Activated T-helper 2 cell treated with anti-CD3 and anti-CD28 coated beads, Interferon-gamma antibody, Interleukin-2, Interleukin-4, amounts not matched to agents 10 μg/mL and 5 μg/mL and 100 μg/mL, durations not matched to agents 14 hours and 24 hours and 36 hours (primary cell): ENCODE measurements at regions of chr3 and their contacts with region 1.

Region 1: GRCh38 chr3:196179380-196180308 is 31.6 kb downstream of the ZDHHC19 start:
- DNase-seq: peak; percentile 81
- H3K4me3 Mint-ChIP-seq: peak overlapping the region; percentile 67
- H3K27ac Mint-ChIP-seq: peak overlapping the region; percentile 98
- H3K4me1 Mint-ChIP-seq: peaks cover 52% of the 10 kb centered on the region
- H3K27me3 Mint-ChIP-seq: no peaks in the 10 kb centered on the region

Region 2: DNA sequence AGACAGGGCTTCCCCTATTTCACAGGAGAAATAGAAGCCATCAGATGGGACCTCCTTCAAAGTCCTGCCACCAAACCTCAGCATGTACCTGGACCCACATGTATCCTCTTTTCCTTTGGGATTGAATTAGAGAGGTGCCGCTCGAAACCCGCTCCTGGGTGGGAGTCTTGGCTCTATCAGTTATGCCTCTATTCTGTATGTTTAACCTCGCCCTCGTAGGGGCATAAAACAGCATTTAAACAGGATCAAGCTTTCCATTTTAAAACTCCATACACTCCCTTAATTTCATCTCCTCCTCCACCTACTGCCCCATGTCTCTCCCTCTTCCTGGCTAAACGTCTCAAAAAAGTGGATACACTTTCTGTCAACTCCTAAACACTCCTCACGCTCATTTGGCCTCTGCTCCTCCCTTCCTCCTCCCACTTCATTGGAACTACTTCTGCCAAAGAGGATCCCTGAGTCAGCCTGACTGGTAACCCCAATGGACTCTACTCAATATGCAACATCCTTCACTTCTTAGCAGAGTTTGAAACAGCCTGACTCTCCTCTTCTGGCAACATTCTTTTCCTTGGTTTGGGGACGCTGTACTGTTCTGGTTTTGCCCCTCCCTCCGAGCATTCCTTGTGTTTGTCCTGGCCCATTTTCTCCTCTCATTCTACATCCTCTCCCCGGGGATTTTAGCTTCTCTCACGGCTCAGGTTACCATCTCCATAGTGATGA is 481.9 kb before region 1 on chr3:
- intact Hi-C with region 1: loop called (anchors 10 kb)
- DNase-seq: no peak
- H3K4me3 Mint-ChIP-seq: no peak overlapping the region
- H3K27ac Mint-ChIP-seq: peak overlapping the region; percentile 42
- H3K4me1 Mint-ChIP-seq: peaks cover 17% of the 10 kb centered on the region
- H3K27me3 Mint-ChIP-seq: no peaks in the 10 kb centered on the region

Region 3: GRCh38 chr3:196016485-196016884 is 163.2 kb before region 1 on chr3:
- intact Hi-C with region 1: no loop called
- DNase-seq: no peak
- H3K4me3 Mint-ChIP-seq: no peak overlapping the region
- H3K27ac Mint-ChIP-seq: peak overlapping the region; percentile 21
- H3K4me1 Mint-ChIP-seq: peaks cover 9% of the 10 kb centered on the region
- H3K27me3 Mint-ChIP-seq: peaks cover 5% of the 10 kb centered on the region

Region 4: DNA sequence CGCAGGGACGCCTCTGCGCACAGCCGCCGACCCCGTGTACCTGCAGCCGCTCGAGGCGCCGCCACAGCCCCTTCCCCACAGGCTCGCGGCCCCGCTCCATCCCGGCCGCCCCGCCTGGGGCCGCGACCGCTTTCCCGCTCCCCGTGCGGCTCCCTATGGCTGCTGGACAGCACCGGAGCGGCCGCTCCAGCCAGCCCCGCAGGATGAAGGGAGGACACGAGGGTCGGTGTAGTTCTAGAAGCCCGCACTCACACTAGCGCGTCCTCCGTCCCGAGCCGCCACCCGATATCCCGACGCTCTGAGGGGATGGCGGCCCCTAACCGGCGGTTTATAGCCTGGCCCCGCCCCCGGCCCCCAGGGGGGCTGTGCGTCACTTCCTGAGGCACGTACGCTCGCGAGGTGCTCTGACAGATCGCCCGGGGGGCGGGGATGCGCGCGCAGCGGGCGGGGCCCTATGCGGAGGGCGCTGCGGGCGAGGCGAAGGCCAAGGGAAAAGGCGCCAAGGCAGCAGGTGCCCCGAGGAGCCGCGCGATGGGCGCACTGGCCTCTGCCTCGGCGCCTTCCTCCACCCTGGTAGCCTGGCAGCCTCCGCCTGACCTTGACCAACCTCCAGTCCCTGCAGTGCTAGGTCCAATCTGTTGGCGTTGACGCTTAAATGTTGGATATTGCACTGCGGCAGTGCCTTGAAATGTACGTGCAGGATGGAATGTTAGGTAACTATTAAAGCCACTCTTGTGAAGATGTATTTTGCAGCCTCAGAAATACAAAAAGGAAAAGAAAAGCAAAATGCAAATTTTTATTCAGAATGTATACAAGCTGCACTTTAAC is 97.6 kb before region 1 on chr3 and contains the start of gene TFRC:
- intact Hi-C with region 1: loop called (anchors 1 kb)
- DNase-seq: peak; percentile 93
- H3K4me3 Mint-ChIP-seq: peak within 1 kb of the TSS; percentile 99
- H3K27ac Mint-ChIP-seq: peak within 1 kb of the TSS; percentile 95
- H3K4me1 Mint-ChIP-seq: peaks cover 29% of the 10 kb centered on the region
- H3K27me3 Mint-ChIP-seq: no peaks in the 10 kb centered on the region
- total RNA-seq, gene TFRC: 644 and 680 TPM in 2 replicates

Region 5: DNA sequence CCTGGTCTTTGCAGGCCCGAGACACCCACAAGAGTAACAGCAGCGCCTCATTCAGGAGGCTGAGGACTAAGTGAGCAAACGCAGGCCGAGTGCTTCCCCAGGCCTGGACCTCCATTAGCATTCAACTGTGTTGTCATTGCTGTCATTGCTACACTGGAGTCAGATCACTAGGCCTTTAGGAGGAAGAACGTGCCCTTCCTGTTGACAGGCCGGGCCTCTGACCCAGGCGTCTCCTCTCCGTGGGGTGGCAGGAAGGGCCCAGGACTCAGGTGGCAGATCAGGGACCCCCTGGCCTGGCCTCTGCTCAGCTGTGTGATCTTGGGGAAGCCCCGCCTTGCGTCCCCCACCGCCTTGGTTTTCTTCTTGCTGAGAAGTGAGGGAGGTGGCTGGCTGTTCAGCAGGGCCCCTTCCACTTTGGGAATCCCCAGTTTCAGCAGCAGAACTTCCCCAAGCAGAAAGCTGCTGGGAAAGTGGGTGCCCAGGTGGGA is 12.4 kb after region 1 on chr3:
- intact Hi-C with region 1: loop called (anchors 1 kb)
- DNase-seq: no peak
- H3K4me3 Mint-ChIP-seq: no peak overlapping the region
- H3K27ac Mint-ChIP-seq: peak overlapping the region; percentile 94
- H3K4me1 Mint-ChIP-seq: peaks cover 27% of the 10 kb centered on the region
- H3K27me3 Mint-ChIP-seq: no peaks in the 10 kb centered on the region

Region 6: GRCh38 chr3:196225086-196225485 is 45.4 kb after region 1 on chr3:
- intact Hi-C with region 1: no loop called
- DNase-seq: no peak
- H3K4me3 Mint-ChIP-seq: no peak overlapping the region
- H3K27ac Mint-ChIP-seq: no peak overlapping the region
- H3K4me1 Mint-ChIP-seq: no peaks in the 10 kb centered on the region
- H3K27me3 Mint-ChIP-seq: peaks cover 5% of the 10 kb centered on the region

Region 7: DNA sequence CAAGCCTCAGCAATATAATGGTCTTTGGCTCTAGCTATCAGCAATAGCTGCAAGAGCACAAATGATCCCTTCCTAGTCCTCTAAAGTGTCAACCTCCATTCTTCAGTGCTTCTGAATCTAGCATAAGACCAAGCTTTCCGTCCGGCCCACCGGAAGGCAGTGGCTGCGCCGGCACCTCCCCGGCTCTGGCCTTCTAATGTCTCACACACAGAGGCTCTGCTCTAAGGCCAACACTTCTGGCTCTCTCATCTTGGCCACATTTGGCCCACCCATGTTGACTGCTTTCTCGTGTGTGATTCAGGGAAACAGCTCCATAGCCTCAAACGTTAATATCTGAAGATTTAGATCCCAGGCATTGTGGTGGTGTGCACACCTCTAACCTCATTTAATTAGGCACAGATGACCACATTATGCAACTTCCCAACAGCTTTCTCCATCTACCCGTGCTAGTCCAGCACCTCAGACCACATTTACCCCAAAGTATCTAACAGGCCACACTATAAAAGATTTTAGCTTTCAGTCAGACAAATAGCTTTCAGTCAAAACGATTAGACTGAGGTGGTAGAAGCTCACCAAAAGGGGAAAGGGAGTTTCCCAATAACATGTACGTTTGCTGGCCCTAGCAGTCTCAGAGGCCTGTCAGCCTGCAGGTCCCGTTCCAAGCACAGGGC is 55.9 kb after region 1 on chr3:
- intact Hi-C with region 1: no loop called
- DNase-seq: no peak
- H3K4me3 Mint-ChIP-seq: no peak overlapping the region
- H3K27ac Mint-ChIP-seq: no peak overlapping the region
- H3K4me1 Mint-ChIP-seq: peaks cover 12% of the 10 kb centered on the region
- H3K27me3 Mint-ChIP-seq: no peaks in the 10 kb centered on the region

Region 8: DNA sequence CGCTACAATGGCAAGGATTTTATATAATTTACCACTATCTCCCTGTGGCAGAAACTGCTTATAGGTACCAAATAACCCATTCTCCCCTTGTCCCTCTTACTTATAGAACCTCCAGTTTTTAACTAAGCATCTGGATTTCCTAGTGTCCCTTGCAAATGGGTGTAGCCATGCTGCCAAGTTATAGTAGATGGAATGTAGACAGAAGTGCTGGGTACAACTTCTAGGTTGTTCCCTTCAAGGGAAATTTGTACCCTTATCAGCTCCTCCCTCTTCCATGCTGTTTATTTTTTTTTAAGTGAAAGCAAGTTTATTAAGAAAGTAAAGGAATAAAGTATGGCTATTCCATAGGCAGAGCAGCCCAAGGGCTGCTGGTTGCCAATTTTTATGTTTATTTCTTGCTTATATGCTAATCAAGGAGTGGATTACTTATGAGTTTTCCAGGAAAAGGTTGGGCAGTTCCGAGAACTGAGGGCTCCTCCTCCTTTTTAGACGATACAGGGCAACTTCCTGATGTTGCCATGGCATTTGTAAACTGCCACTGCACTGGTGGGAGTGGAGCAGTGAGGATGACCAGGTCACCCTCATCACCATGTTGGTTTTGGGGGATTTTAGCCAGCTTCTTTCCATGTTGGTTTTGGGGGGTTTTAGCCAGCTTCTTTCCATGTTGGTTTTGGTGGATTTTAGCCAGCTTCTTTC is 198.7 kb after region 1 on chr3:
- intact Hi-C with region 1: no loop called
- DNase-seq: no peak
- H3K4me3 Mint-ChIP-seq: no peak overlapping the region
- H3K27ac Mint-ChIP-seq: no peak overlapping the region
- H3K4me1 Mint-ChIP-seq: peaks cover 6% of the 10 kb centered on the region
- H3K27me3 Mint-ChIP-seq: no peaks in the 10 kb centered on the region

Region 9: DNA sequence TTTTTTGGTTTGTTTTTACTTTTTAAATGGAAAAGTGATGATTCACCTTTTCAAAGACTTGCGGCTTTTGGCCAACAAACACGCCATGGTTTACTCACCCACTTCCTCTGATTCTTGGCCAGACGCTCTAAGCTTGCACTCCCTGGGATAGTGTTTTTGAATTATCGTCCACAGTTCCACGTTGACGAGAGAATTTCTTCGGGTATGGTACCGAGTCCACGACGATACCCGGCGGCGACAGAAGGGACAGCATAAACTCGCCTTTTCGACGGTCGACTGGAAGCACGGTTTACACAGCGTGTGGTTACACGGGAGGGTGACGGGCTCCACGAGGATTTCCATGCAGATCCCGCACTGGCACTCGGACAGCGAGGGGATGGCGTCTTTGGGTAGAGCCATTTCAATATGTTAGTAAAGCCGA is 323.1 kb after region 1 on chr3:
- intact Hi-C with region 1: loop called (anchors 2 kb)
- DNase-seq: peak; percentile 60
- H3K4me3 Mint-ChIP-seq: peak overlapping the region; percentile 99
- H3K27ac Mint-ChIP-seq: peak overlapping the region; percentile 100
- H3K4me1 Mint-ChIP-seq: peaks cover 25% of the 10 kb centered on the region
- H3K27me3 Mint-ChIP-seq: no peaks in the 10 kb centered on the region